Posterior vena cava (tissue), 2 donors: ENCODE measurements at regions of chr7 and their contacts with region 1.

Region 1: GRCh38 chr7:147207988-147208387 is 1091.4 kb downstream of the CNTNAP2 start:
- DNase-seq: no peak

Region 2: GRCh38 chr7:146290746-146291145 is 917.2 kb before region 1 on chr7:
- intact Hi-C with region 1: no loop called
- DNase-seq: no peak

Region 3: DNA sequence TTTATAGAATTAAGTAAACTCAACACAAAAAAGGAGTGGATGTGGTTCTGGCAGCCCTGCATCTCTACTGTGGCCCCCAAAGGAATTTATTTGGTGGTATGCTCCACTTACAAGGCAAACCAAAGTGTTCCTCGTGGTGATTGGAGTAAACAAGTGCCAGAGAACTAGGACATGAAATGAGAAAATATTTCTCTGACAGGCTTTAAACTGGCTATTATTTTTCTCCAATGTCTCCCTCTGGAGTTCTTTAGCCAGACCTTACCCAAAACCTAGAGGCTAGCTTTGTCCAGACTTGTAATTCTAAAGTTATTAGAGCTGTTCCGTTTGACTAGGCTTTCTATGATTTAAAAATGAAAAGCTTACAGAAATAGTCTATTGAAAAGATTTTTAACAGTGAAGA is 101.2 kb before region 1 on chr7:
- intact Hi-C with region 1: no loop called
- DNase-seq: no peak

Region 4: GRCh38 chr7:147170341-147171012 is 37.5 kb before region 1 on chr7:
- intact Hi-C with region 1: loop called in 1 of 2 experiments (anchors 2 kb)
- DNase-seq: peak; percentile 70

Region 5: GRCh38 chr7:147182874-147183273 is 25.1 kb before region 1 on chr7:
- intact Hi-C with region 1: no loop called
- DNase-seq: no peak

Region 6: GRCh38 chr7:147363101-147363500 is 155.1 kb after region 1 on chr7:
- intact Hi-C with region 1: no loop called
- DNase-seq: no peak